ENCODE measurements at regions of chr5 and their contacts with region 1.

Region 1: GRCh38 chr5:18202149-18202548 is 567.9 kb downstream of the TAF11L14 start:
- DNase-seq: peak; percentile 27
- H3K4me3 Mint-ChIP-seq: no peak overlapping the region
- H3K27ac Mint-ChIP-seq: peak overlapping the region; percentile 57
- H3K4me1 Mint-ChIP-seq: peaks cover 6% of the 10 kb centered on the region
- H3K27me3 Mint-ChIP-seq: no peaks in the 10 kb centered on the region
- CTCF ChIP-seq: no peak

Region 2: GRCh38 chr5:18270683-18271338 is 68.7 kb after region 1 on chr5:
- CTCF ChIA-PET with region 1: no interaction called
- POLR2A ChIA-PET with region 1: no interaction called
- intact Hi-C with region 1: loop called (anchors 5 kb)
- DNase-seq: peak; percentile 66
- H3K4me3 Mint-ChIP-seq: no peak overlapping the region
- H3K27ac Mint-ChIP-seq: no peak overlapping the region
- H3K4me1 Mint-ChIP-seq: peaks cover 13% of the 10 kb centered on the region
- H3K27me3 Mint-ChIP-seq: no peaks in the 10 kb centered on the region
- CTCF ChIP-seq: no peak